ENCODE measurements at regions of chr19 and their contacts with region 1.

Region 1: GRCh38 chr19:43595999-43596841 is at the starts of genes IRGQ and ZNF576:
- DNase-seq: peak; percentile 98
- ATAC-seq: peak; percentile 86
- H3K4me3 ChIP-seq: peak within 1 kb of the TSS; percentile 93
- H3K27ac ChIP-seq: peak within 1 kb of the TSS; percentile 85
- H3K4me1 ChIP-seq: peaks cover 7% of the 10 kb centered on the region; the same call in 1 of the 2 replicates
- H3K27me3 ChIP-seq: no peaks in the 10 kb centered on the region
- CTCF ChIP-seq: peak in 1 of 3 experiments; percentile 12; a peak in 1 of 6 replicates
- EP300 ChIP-seq: no peak
- POLR2A ChIP-seq: peak; percentile 48
- RAD21 ChIP-seq: no peak
- polyA plus RNA-seq, gene IRGQ: 3.3 to 10.7 TPM
- polyA plus RNA-seq, gene ZNF576: 13.2 to 15.2 TPM

Region 2: DNA sequence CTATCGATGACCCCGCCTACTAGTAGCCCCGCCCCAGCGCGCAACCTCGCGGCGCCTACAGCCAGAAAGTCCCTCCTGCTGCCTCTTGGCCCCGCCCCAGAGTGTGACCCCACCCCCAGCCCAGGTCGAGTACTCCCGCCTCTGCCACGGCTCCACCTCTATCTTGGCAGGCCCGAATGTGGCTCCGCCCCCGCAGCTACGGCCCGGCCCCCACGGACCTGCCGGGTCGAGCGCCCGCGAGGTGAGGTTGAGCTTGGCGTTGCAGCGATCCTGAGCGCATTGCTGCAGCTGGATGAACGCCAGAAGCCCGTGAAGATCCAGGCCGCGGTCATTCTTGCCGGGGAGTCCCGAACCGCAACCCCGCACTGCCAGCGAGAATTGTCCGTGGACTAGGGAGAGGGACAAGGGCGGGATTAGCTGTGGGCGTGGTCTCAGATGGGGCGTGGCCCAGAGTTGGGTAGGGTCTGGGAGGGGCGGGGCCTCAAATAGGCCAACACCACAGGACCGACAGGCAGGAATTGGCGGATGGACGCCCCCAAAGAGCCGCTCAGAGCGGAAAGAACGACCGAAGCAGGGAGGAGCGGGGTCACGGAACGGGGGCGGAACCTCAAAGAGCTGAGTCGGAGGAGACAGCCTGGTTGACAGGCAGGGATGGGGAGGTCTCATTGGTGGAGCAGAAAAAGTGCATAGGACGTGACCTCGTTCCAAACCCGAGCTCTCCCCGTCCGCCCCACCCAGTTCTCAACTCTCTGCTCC is 132.7 kb before region 1 on chr19:
- CTCF ChIA-PET with region 1: no interaction called
- POLR2A ChIA-PET with region 1: no interaction called
- RAD21 ChIA-PET with region 1: interaction called, 5 read pairs
- SMC1A ChIA-PET with region 1: no interaction called
- in situ Hi-C with region 1: no loop called
- intact Hi-C with region 1: loop called (anchors 1 kb)
- DNase-seq: peak; percentile 73
- ATAC-seq: peak; percentile 97
- H3K4me3 ChIP-seq: peak overlapping the region; percentile 77
- H3K27ac ChIP-seq: no peak overlapping the region
- H3K4me1 ChIP-seq: peaks cover 8% of the 10 kb centered on the region; the same call in 1 of the 2 replicates
- H3K27me3 ChIP-seq: no peaks in the 10 kb centered on the region
- CTCF ChIP-seq: no peak
- EP300 ChIP-seq: no peak
- POLR2A ChIP-seq: no peak
- RAD21 ChIP-seq: no peak

Region 3: DNA sequence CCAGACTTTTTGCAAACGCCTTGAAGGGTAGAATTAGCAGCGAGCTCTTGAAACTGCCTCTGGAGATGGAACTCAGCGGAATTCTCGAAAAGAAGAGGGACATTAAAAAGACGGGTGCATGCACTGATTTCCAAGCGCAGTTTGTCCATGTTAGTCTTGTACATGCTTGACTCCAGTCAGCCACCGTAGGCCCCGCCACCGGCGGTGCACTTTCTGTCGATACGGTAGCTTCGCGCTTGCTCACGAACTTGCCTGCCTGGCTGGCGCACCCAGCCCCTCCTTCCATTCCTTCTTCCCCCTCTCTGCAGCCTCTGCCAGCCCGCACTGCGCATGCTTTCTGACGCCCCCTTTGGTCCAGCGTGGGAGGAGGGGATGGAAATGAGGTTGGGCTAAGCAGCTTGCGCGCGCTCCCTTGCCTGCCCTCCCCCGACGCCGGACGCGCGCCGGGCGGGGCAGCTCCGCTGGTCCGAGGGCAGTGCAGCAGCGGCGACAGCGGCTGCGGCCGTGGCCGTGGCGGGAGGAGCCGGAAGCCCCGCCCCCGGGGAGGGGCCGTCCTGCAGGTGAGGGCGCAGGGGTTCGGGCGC is 63.2 kb before region 1 on chr19 and contains the start of gene ZNF575:
- CTCF ChIA-PET with region 1: interaction called, 37 read pairs
- POLR2A ChIA-PET with region 1: interaction called, 11 read pairs
- RAD21 ChIA-PET with region 1: interaction called, 18 read pairs
- SMC1A ChIA-PET with region 1: interaction called, 9 read pairs
- in situ Hi-C with region 1: no loop called
- intact Hi-C with region 1: loop called (anchors 2 kb)
- DNase-seq: peak; percentile 91
- ATAC-seq: peak; percentile 88
- H3K4me3 ChIP-seq: peak within 1 kb of the TSS; percentile 74
- H3K27ac ChIP-seq: peak within 1 kb of the TSS; percentile 37
- H3K4me1 ChIP-seq: peaks cover 8% of the 10 kb centered on the region; the same call in 1 of the 2 replicates
- H3K27me3 ChIP-seq: no peaks in the 10 kb centered on the region
- CTCF ChIP-seq: no peak
- EP300 ChIP-seq: no peak
- POLR2A ChIP-seq: peak; percentile 68
- RAD21 ChIP-seq: no peak
- polyA plus RNA-seq, gene ZNF575: 0.23 to 0.35 TPM

Region 4: GRCh38 chr19:43570174-43570791 is 25.9 kb before region 1 on chr19:
- CTCF ChIA-PET with region 1: interaction called, 34 read pairs
- POLR2A ChIA-PET with region 1: interaction called, 22 read pairs
- RAD21 ChIA-PET with region 1: interaction called, 33 read pairs
- SMC1A ChIA-PET with region 1: interaction called, 25 read pairs
- in situ Hi-C with region 1: no loop called
- intact Hi-C with region 1: loop called (anchors 1 kb)
- DNase-seq: no peak
- ATAC-seq: peak; percentile 33; the same call in 2 of the 3 replicates
- H3K4me3 ChIP-seq: no peak overlapping the region
- H3K27ac ChIP-seq: no peak overlapping the region
- H3K4me1 ChIP-seq: no peaks in the 10 kb centered on the region; the same call in 1 of the 2 replicates
- H3K27me3 ChIP-seq: no peaks in the 10 kb centered on the region
- CTCF ChIP-seq: no peak
- EP300 ChIP-seq: no peak
- POLR2A ChIP-seq: no peak
- RAD21 ChIP-seq: no peak

Region 5: GRCh38 chr19:43619262-43620060 is 23.2 kb after region 1 on chr19 and contains the start of gene ZNF428:
- CTCF ChIA-PET with region 1: interaction called, 7 read pairs
- POLR2A ChIA-PET with region 1: interaction called, 11 read pairs
- RAD21 ChIA-PET with region 1: interaction called, 3 read pairs
- SMC1A ChIA-PET with region 1: interaction called, 4 read pairs
- in situ Hi-C with region 1: no loop called
- intact Hi-C with region 1: no loop called
- DNase-seq: peak; percentile 67
- ATAC-seq: peak; percentile 95
- H3K4me3 ChIP-seq: peak within 1 kb of the TSS; percentile 82
- H3K27ac ChIP-seq: peak within 1 kb of the TSS; percentile 77
- H3K4me1 ChIP-seq: peaks cover 6% of the 10 kb centered on the region; the same call in 1 of the 2 replicates
- H3K27me3 ChIP-seq: no peaks in the 10 kb centered on the region
- CTCF ChIP-seq: no peak
- EP300 ChIP-seq: no peak
- POLR2A ChIP-seq: peak; percentile 87
- RAD21 ChIP-seq: no peak
- polyA plus RNA-seq, gene ZNF428: 0.27 to 0.38 TPM

Region 6: DNA sequence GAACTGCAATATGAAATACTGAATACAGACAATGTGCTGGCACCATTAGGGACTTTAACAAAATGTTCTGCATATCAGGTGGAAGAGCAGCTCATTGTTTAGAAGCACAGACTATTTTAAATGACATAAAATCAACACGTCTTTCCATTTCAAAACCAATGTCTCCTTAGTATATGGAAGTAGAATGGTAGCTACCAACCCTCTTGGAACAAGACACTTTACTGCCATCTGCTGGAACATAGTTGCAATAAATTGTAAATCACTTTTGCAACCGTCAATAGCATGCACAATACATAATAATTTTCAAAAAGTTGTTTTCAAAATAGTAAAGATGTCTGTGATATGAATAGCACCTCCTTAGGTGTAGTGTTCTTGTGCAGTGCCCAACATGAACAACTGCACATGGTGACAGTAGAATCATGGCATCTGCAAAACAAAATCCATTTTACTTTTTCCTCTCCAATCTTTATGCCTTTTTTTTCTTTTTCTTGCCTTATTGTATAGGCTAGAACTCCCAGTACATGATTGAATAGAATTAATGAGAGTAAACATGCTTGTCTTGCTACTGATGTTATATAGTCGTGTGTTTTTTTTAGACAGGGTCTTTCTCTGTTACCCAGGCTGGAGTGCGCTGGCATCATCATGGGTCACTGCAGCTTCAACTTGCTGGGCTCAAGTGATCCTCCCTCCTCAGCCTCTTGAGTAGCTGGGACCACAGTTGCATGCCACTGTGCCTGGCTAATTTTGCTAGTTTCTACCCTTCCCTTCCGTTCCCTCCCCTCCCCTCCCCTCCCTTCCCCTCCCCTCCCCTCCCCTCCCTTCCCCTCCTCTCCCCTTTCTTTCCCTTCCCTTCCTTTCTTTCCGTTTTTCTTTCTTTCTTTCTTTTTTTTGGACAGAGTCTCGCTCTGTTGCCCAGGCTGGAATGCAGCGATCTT is 213.8 kb after region 1 on chr19:
- CTCF ChIA-PET with region 1: interaction called, 22 read pairs
- POLR2A ChIA-PET with region 1: no interaction called
- RAD21 ChIA-PET with region 1: interaction called, 12 read pairs
- SMC1A ChIA-PET with region 1: interaction called, 8 read pairs
- in situ Hi-C with region 1: no loop called
- intact Hi-C with region 1: no loop called
- DNase-seq: peak; percentile 24
- ATAC-seq: peak; percentile 87
- H3K4me3 ChIP-seq: no peak overlapping the region
- H3K27ac ChIP-seq: no peak overlapping the region
- H3K4me1 ChIP-seq: no peaks in the 10 kb centered on the region
- H3K27me3 ChIP-seq: no peaks in the 10 kb centered on the region
- CTCF ChIP-seq: peak; percentile 36 to 76 (median 54); a peak in 4 of 6 replicates
- EP300 ChIP-seq: no peak
- POLR2A ChIP-seq: no peak
- RAD21 ChIP-seq: peak; percentile 78